AG04449 (cell line): ENCODE measurements at regions of chr11 and their contacts with region 1.

Region 1: DNA sequence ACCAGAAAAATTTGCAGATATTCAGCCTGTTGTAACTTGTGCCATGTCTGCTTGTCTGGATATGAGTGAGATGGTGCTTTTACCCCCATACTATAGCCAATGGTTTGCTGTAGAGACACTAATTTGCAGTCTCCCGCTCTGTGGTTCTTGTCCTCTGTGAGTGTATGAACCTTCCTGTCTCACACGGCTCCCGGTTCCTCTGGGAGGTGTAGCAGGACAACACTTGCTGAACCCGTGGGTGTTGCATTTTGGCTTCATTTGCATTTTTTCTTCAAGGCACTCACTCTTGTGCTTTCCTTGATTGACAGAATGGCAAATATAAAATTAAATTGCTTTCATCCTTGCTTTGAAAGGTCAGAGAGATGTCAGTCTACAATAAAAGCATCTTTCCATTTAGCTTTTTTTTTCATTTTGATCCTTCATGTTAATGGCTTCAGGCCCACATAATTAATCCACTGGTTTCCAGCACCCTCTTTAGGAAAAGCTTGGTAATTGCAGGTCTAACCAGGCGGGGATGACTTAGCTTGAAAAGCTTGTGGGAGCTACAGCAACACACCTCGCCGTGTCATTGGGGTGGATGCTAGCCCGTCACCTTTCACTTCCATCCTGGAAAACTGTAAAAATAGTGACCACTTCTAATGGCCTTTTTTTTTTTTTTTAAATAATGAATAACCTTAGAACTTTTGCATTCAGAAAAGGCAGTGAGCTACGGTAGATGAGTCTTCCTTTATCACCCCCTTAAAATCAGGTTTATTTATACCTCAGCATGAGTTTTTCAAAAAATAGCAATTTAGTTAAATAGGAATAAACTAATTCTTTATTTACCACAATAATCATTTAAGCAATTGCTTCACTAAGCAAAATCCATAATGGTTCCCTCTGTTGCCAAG is 27.4 kb upstream of the ST14 start:
- DNase-seq: no peak
- H3K4me3 ChIP-seq: no peak overlapping the region
- CTCF ChIP-seq: peak; percentile 72

Region 2: DNA sequence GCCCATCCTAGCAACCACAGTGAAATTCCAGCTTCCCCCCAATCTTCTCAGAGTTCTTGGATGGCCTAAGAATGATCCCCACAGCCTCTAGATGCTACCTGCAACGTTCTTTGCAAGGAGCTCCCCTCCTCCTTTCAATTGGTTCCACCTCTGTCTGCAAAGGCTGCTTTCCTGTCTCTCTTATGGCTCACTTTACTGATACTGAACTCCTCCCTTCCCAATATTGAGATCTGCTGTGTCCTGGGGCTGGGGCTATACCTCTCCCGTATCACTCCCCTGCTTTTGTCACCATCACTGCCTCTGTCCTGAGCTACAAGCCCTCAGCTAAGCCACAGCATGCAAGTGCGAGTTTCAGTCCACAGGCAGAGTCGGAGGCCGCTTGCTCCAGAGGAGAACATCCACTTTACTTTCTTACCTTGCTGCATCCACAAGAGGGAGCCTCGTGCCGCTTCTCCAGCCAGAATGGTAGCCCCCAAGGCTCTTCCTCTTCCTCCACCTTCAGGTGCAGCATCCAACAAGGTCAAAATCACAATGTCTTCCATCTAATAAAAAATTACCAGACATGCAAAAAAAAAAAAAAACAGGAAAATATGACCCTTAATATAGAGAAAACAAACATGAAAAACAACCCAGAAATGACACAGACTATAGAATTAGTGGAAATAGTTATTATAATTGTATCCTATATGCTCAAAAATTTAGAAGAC is 365.2 kb before region 1 on chr11:
- CTCF ChIA-PET with region 1: interaction called, 26 read pairs
- POLR2A ChIA-PET with region 1: no interaction called
- DNase-seq: no peak
- H3K4me3 ChIP-seq: no peak overlapping the region
- CTCF ChIP-seq: peak; percentile 59

Region 3: GRCh38 chr11:129785383-129786111 is 346.7 kb before region 1 on chr11:
- CTCF ChIA-PET with region 1: interaction called, 12 read pairs
- POLR2A ChIA-PET with region 1: no interaction called
- DNase-seq: no peak
- H3K4me3 ChIP-seq: no peak overlapping the region
- CTCF ChIP-seq: no peak

Region 4: DNA sequence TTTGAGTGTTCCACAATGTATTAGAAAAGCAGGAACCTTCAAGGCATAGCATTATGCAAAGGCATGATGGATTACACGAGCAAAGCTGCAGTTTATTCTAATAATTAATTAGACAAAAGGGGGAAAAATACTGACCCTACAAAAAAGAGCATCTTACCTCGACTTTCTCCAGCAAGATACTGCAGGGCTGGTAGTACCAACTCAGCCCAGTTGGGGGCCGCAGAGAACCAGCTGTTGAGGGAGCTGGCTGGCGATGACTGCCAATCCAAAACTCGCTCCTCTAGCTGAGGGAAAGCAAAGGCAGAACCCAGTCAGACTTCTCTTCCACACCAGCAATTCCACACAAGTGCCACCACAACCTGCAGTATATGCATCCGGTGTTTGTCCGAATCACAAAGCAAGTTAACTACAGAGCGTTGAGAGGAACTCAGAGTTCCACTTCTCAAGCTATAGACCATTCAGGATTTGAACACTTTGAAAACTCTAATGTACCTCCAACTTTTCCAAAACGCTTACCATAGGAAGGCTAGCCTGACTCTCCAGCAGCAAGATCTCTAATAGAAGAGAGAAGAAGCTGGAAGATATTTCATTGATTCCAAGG is 250.5 kb before region 1 on chr11:
- CTCF ChIA-PET with region 1: interaction called, 47 read pairs
- POLR2A ChIA-PET with region 1: no interaction called
- DNase-seq: no peak
- H3K4me3 ChIP-seq: no peak overlapping the region
- CTCF ChIP-seq: peak; percentile 68

Region 5: DNA sequence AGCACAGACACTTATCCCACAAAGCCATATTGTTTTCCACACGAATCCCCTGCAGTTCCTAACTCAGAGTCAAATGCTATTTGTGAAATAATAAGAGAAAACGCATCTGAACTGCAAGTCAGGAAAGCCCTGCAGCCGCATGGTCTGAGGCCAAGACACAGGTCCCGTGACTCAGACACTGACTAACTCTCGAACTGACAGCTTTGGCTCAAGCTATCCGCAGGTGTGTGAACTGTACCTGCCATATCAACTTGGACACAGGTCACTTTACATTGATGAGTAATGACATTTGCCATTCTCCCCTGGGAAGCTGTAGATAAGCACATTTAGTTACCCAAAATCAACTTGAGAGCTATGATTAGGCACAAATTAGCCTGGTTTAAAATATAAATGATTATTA is 201.9 kb before region 1 on chr11:
- CTCF ChIA-PET with region 1: interaction called, 489 read pairs
- POLR2A ChIA-PET with region 1: no interaction called
- DNase-seq: no peak
- H3K4me3 ChIP-seq: no peak overlapping the region
- CTCF ChIP-seq: no peak

Region 6: GRCh38 chr11:130118636-130119387 is 13.4 kb before region 1 on chr11:
- CTCF ChIA-PET with region 1: interaction called, 36 read pairs
- POLR2A ChIA-PET with region 1: no interaction called
- DNase-seq: no peak
- H3K4me3 ChIP-seq: no peak overlapping the region
- CTCF ChIP-seq: no peak

Region 7: GRCh38 chr11:130189492-130190210 is 57.4 kb after region 1 on chr11:
- CTCF ChIA-PET with region 1: no interaction called
- POLR2A ChIA-PET with region 1: no interaction called
- DNase-seq: no peak
- H3K4me3 ChIP-seq: no peak overlapping the region
- CTCF ChIP-seq: no peak

Region 8: DNA sequence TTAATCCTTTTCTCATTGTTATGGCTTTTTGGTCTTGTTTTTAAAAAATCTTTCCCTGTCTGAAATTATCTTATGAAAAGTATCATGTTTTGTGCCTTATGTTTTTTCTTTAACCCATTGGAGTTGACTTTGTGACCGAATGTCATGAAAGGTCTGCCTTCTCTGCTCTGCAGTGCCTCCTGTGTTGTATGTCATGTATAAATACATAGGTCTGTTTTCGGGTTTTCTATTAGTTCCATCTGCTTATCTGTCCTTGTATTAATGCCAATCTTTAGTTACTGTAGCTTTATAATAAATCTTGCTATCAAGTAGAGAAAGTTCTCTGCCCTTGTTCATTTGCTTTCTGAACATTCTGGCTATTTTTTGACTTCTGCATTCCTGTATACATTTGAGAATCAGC is 109.5 kb after region 1 on chr11:
- CTCF ChIA-PET with region 1: no interaction called
- POLR2A ChIA-PET with region 1: no interaction called
- DNase-seq: no peak
- H3K4me3 ChIP-seq: no peak overlapping the region
- CTCF ChIP-seq: no peak